CD4-positive, alpha-beta T cell (primary cell): ENCODE measurements at regions of chr10 and their contacts with region 1.

Region 1: DNA sequence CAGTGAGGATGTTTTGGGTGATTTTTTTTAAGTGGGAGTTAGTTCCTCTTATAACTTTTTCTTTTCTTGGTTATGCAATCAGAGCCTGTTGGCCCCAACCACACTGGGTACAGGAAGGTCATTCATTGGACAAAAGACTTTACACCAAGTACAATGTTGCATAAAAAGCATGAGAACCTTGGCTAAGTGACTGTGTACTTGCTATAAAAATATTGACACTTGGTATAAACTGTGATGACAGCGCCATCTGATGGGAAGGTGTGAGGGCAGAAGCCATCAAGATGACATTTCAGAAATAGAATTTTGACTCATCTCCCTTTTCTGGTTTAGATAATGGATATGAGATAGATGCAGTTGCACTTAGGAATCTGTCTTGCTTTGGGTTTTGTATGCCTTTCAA is 126.4 kb upstream of the CCDC6 start:
- DNase-seq: peak in 7 of 14 experiments; percentile 3 to 62 (median 32)
- ATAC-seq: no peak
- H3K4me3 ChIP-seq: no peak overlapping the region
- H3K4me3 Mint-ChIP-seq: no peak overlapping the region
- H3K27ac ChIP-seq: no peak overlapping the region
- H3K27ac Mint-ChIP-seq: no peak overlapping the region
- H3K4me1 ChIP-seq: no peaks in the 10 kb centered on the region
- H3K4me1 Mint-ChIP-seq: no peaks in the 10 kb centered on the region
- H3K27me3 ChIP-seq: no peaks in the 10 kb centered on the region
- H3K27me3 Mint-ChIP-seq: no peaks in the 10 kb centered on the region
- CTCF ChIP-seq: no peak

Region 2: DNA sequence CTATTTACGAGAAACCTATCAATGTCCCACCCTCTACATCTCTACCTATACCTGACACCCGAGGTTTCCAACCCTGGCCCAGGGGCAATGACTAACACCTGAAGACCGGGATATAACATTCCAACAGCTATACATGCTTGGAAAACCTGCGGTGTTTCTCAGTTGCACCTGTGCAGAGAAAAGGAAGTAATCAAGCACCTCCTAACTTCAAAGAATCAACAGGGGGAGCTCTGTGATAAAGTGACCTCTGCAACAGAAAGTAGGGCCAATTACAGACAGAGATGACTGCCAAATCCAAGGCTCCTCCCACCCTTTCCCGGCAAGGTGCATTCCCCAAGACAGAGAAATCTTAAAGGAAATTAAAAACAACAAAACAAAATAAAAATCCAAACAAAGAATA is 167.6 kb before region 1 on chr10:
- CTCF ChIA-PET with region 1: no interaction called
- POLR2A ChIA-PET with region 1: no interaction called
- intact Hi-C with region 1: loop called in 1 of 2 experiments (anchors 10 kb)
- DNase-seq: peak in 3 of 14 experiments; percentile 39 to 55 (median 51)
- ATAC-seq: peak; percentile 54
- H3K4me3 ChIP-seq: no peak overlapping the region
- H3K4me3 Mint-ChIP-seq: no peak overlapping the region
- H3K27ac ChIP-seq: no peak overlapping the region
- H3K27ac Mint-ChIP-seq: peak overlapping the region; percentile 10
- H3K4me1 ChIP-seq: peaks cover 16% of the 10 kb centered on the region
- H3K4me1 Mint-ChIP-seq: peaks cover 79% of the 10 kb centered on the region
- H3K27me3 ChIP-seq: no peaks in the 10 kb centered on the region
- H3K27me3 Mint-ChIP-seq: no peaks in the 10 kb centered on the region
- CTCF ChIP-seq: peak; percentile 58

Region 3: GRCh38 chr10:60099998-60100747 is 67.5 kb after region 1 on chr10:
- CTCF ChIA-PET with region 1: no interaction called
- POLR2A ChIA-PET with region 1: no interaction called
- intact Hi-C with region 1: no loop called
- DNase-seq: peak in 4 of 14 experiments; percentile 6 to 67 (median 56)
- ATAC-seq: peak; percentile 66
- H3K4me3 ChIP-seq: no peak overlapping the region
- H3K4me3 Mint-ChIP-seq: no peak overlapping the region
- H3K27ac ChIP-seq: no peak overlapping the region
- H3K27ac Mint-ChIP-seq: no peak overlapping the region
- H3K4me1 ChIP-seq: no peaks in the 10 kb centered on the region
- H3K4me1 Mint-ChIP-seq: no peaks in the 10 kb centered on the region
- H3K27me3 ChIP-seq: no peaks in the 10 kb centered on the region
- H3K27me3 Mint-ChIP-seq: no peaks in the 10 kb centered on the region
- CTCF ChIP-seq: peak; percentile 76